ENCODE measurements at regions of chr6 and their contacts with region 1.

Region 1: DNA sequence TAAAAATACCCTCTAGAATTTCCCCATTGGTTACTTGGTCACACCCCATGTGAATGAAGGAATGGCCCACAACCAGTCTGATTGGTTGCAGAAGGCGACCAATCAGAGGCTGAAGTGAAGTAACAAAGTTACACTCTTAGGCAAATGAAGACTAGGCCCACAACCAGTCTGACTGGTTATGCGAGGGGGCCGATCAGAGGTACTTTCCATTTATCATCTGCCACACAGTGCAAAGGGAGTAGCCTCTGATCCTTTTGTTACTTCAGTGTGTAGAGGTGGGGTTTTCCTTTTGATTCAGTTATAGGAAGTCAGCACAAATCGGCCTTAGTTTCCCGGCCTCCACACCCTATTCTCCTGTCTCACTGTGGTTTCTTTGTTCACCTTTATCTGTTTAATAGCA is 61.2 kb upstream of the SGK1 start:
- DNase-seq: peak; percentile 87
- H3K4me3 Mint-ChIP-seq: peak overlapping the region; percentile 35
- H3K27ac Mint-ChIP-seq: peak overlapping the region; percentile 84
- H3K4me1 Mint-ChIP-seq: peaks cover 40% of the 10 kb centered on the region
- H3K27me3 Mint-ChIP-seq: no peaks in the 10 kb centered on the region

Region 2: GRCh38 chr6:134235937-134236751 is 142.9 kb before region 1 on chr6:
- CTCF ChIA-PET with region 1: no interaction called
- intact Hi-C with region 1: loop called (anchors 1 kb)
- DNase-seq: peak; percentile 41
- H3K4me3 Mint-ChIP-seq: peak overlapping the region; percentile 15
- H3K27ac Mint-ChIP-seq: peak overlapping the region; percentile 95
- H3K4me1 Mint-ChIP-seq: peaks cover 57% of the 10 kb centered on the region
- H3K27me3 Mint-ChIP-seq: no peaks in the 10 kb centered on the region

Region 3: GRCh38 chr6:134317471-134318131 is 61.5 kb before region 1 on chr6 and contains the start of gene SGK1:
- CTCF ChIA-PET with region 1: no interaction called
- intact Hi-C with region 1: loop called (anchors 2 kb)
- DNase-seq: peak; percentile 43
- H3K4me3 Mint-ChIP-seq: peak within 1 kb of the TSS; percentile 85
- H3K27ac Mint-ChIP-seq: peak within 1 kb of the TSS; percentile 14
- H3K4me1 Mint-ChIP-seq: peaks cover 36% of the 10 kb centered on the region
- H3K27me3 Mint-ChIP-seq: peaks cover 21% of the 10 kb centered on the region
- total RNA-seq, gene SGK1: 202 to 208 TPM

Region 4: GRCh38 chr6:134424165-134424790 is 45.2 kb after region 1 on chr6:
- CTCF ChIA-PET with region 1: interaction called, 3 read pairs
- intact Hi-C with region 1: loop called (anchors 2 kb)
- DNase-seq: no peak
- H3K4me3 Mint-ChIP-seq: no peak overlapping the region
- H3K27ac Mint-ChIP-seq: no peak overlapping the region
- H3K4me1 Mint-ChIP-seq: peaks cover 25% of the 10 kb centered on the region
- H3K27me3 Mint-ChIP-seq: no peaks in the 10 kb centered on the region

Region 5: DNA sequence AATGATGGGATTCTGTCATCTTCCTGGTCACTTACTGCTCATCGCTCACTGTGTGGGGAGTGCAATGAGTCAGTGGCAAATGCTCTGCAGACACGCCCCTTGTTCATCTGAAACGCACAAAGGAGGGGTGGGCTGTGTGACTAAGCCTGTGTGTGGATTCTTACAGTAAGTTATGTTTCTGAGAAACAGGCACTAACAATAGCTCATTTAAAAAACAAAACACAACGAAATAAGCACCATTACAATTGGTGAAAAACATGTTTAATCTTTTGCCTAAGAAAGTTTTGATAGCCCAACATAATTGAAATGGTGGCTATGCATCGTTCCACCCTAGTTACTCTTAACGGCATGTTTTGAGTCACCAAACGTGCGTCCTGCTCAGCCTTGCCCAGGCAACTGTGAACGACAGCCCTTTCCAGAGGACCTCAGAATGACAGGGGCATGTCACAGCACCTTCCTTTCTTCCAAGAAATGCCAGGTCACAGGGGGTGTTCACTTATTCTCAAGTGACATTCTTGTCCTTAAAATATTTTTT is 57.3 kb after region 1 on chr6:
- CTCF ChIA-PET with region 1: no interaction called
- intact Hi-C with region 1: loop called (anchors 1 kb)
- DNase-seq: peak; percentile 88
- H3K4me3 Mint-ChIP-seq: peak overlapping the region; percentile 44
- H3K27ac Mint-ChIP-seq: peak overlapping the region; percentile 86
- H3K4me1 Mint-ChIP-seq: peaks cover 31% of the 10 kb centered on the region
- H3K27me3 Mint-ChIP-seq: no peaks in the 10 kb centered on the region

Region 6: DNA sequence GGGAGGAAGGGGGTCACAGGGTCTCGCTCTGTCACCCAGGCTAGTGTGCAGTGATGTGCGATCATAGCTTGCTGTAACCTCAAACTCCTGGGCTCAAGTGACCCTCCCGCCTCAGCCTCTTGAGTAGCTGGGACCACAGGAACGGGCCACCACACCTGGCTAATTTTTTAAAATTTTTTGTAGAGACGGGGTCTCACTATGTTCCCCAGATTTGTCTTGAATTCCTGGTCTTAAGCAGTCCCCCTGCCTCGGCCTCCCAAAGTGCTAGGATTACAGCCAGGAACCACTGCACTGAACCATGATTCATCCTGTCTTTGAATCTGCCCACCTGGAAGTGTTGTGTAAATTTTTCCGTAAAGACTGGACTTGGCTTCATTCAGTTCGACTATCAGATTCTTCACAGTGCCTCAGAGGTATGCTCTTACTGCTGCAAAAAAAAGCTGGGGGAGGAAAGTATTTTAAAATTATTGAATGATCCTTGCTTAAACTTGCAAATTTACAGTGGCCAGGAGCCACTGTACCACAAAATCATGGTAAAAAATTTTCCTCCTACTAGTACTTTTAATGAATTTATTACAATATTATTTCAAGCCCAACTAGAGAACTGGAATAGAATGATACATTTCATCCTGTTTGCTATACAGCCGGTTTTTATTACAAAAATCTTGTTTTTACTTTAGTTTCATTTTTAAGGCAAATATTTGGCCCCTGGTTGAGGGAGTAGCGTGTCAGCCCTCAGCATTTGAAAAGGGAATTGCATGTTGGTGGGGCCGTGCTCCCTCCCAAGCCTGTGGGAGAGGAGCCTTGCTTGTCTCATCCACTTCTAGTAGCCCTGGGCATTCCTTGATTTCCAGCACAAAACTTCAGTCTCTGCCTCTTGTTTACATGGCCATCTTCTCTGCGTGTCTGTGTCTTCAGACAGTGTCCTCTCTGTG is 141.4 kb after region 1 on chr6:
- CTCF ChIA-PET with region 1: no interaction called
- intact Hi-C with region 1: loop called (anchors 2 kb)
- DNase-seq: no peak
- H3K4me3 Mint-ChIP-seq: no peak overlapping the region
- H3K27ac Mint-ChIP-seq: peak overlapping the region; percentile 56
- H3K4me1 Mint-ChIP-seq: peaks cover 57% of the 10 kb centered on the region
- H3K27me3 Mint-ChIP-seq: no peaks in the 10 kb centered on the region